HepG2 (cell line): ENCODE measurements at regions of chr19 and their contacts with region 1.

Region 1: DNA sequence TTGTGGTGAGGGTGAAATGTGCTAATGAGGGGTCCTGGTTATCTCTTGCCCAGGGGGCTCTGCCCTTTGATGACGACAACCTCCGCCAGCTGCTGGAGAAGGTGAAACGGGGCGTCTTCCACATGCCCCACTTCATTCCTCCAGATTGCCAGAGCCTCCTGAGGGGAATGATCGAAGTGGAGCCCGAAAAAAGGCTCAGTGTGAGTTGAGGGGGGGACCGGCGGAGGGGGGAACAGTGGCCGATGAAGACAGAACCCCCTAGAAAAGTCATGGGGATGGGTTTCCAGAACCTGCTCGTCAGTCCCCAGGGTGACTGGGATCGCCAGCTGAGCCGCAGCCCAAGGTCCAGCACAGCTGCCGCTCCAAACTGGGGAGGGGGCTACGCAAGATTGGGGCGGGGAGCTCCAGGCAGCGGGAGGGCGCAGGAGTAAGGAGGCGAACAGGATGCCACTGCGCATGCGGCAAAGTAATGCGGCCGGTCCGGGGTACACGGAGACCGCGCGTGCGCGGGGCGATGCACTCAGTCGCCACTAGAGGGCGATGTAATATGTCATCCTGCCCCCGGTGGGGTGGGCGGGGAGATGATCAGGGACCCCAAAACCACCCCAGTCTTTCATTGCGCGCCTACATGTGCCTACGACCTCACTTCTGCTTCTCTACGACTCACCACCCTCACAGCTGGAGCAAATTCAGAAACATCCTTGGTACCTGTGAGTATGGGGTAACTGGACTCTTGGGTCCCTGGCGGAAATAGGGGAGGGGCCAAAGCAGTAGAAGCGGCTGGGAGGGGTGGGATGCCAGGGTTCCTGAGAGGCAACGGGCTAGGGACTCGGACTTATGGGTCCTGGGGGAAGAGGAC is 17.9 kb downstream of the BRSK1 start:
- DNase-seq: peak; percentile 68
- ATAC-seq: peak; percentile 75
- H3K4me3 ChIP-seq: peak overlapping the region; percentile 55 to 75 (median 72)
- H3K27ac ChIP-seq: no peak overlapping the region
- H3K4me1 ChIP-seq: peaks cover 29% of the 10 kb centered on the region
- H3K27me3 ChIP-seq: peaks cover 0 to 20% of the 10 kb centered on the region in 2 experiments; a peak in 2 of 5 replicates
- CTCF ChIP-seq: peak; percentile 97
- EP300 ChIP-seq: no peak
- POLR2A ChIP-seq: peak in 1 of 2 experiments; percentile 48; a peak in 1 of 4 replicates
- RAD21 ChIP-seq: peak; percentile 78

Region 2: GRCh38 chr19:55279770-55280643 is 21.7 kb before region 1 on chr19 and contains the start of gene HSPBP1:
- CTCF ChIA-PET with region 1: no interaction called
- POLR2A ChIA-PET with region 1: interaction called, 12 read pairs
- in situ Hi-C with region 1: no loop called
- intact Hi-C with region 1: no loop called
- DNase-seq: peak; percentile 92
- ATAC-seq: peak; percentile 90
- H3K4me3 ChIP-seq: peak within 1 kb of the TSS; percentile 86 to 97 (median 93)
- H3K27ac ChIP-seq: peak within 1 kb of the TSS; percentile 68
- H3K4me1 ChIP-seq: peaks cover 24% of the 10 kb centered on the region
- H3K27me3 ChIP-seq: peaks cover 0 to 9% of the 10 kb centered on the region in 2 experiments; a peak in 3 of 5 replicates
- CTCF ChIP-seq: no peak
- EP300 ChIP-seq: no peak
- POLR2A ChIP-seq: peak; percentile 72 to 86
- RAD21 ChIP-seq: peak; percentile 10; the same call in 1 of the 2 replicates
- total RNA-seq, gene HSPBP1: 33.7 and 35.9 TPM in 2 replicates

Region 3: GRCh38 chr19:55339048-55339888 is 37.6 kb after region 1 on chr19 and contains the start of gene KMT5C:
- CTCF ChIA-PET with region 1: interaction called, 3 read pairs
- POLR2A ChIA-PET with region 1: interaction called, 15 read pairs
- in situ Hi-C with region 1: no loop called
- intact Hi-C with region 1: loop called (anchors 1 kb)
- DNase-seq: peak; percentile 100
- ATAC-seq: peak; percentile 91
- H3K4me3 ChIP-seq: peak within 1 kb of the TSS; percentile 82 to 99 (median 91)
- H3K27ac ChIP-seq: peak within 1 kb of the TSS; percentile 86
- H3K4me1 ChIP-seq: peaks cover 31% of the 10 kb centered on the region
- H3K27me3 ChIP-seq: no peaks in the 10 kb centered on the region; a peak in 1 of 5 replicates
- CTCF ChIP-seq: peak; percentile 59
- EP300 ChIP-seq: no peak
- POLR2A ChIP-seq: peak in 1 of 2 experiments; percentile 14; a peak in 2 of 4 replicates
- RAD21 ChIP-seq: peak; percentile 19; the same call in 1 of the 2 replicates
- total RNA-seq, gene KMT5C: 2.1 and 5.5 TPM in 2 replicates

Region 4: GRCh38 chr19:55385740-55386529 is 84.2 kb after region 1 on chr19 and contains the start of gene RPL28:
- CTCF ChIA-PET with region 1: no interaction called
- POLR2A ChIA-PET with region 1: interaction called, 7 read pairs
- in situ Hi-C with region 1: no loop called
- intact Hi-C with region 1: loop called (anchors 1 kb)
- DNase-seq: peak; percentile 96
- ATAC-seq: peak; percentile 77
- H3K4me3 ChIP-seq: peak within 1 kb of the TSS; percentile 86 to 100 (median 89)
- H3K27ac ChIP-seq: peak within 1 kb of the TSS; percentile 92
- H3K4me1 ChIP-seq: peaks cover 42% of the 10 kb centered on the region
- H3K27me3 ChIP-seq: no peaks in the 10 kb centered on the region; a peak in 1 of 5 replicates
- CTCF ChIP-seq: no peak; the same call in 1 of the 2 replicates
- EP300 ChIP-seq: no peak
- POLR2A ChIP-seq: peak; percentile 99 to 100
- RAD21 ChIP-seq: no peak
- total RNA-seq, gene RPL28: 105 and 149 TPM in 2 replicates

Region 5: GRCh38 chr19:55418185-55418584 is 116.5 kb after region 1 on chr19:
- CTCF ChIA-PET with region 1: interaction called, 9 read pairs
- POLR2A ChIA-PET with region 1: interaction called, 3 read pairs
- in situ Hi-C with region 1: loop called (anchors 5 kb)
- intact Hi-C with region 1: no loop called
- DNase-seq: peak; percentile 70
- ATAC-seq: peak; percentile 92
- H3K4me3 ChIP-seq: no peak overlapping the region
- H3K27ac ChIP-seq: no peak overlapping the region
- H3K4me1 ChIP-seq: peaks cover 10% of the 10 kb centered on the region
- H3K27me3 ChIP-seq: peaks cover 0 to 11% of the 10 kb centered on the region in 2 experiments; a peak in 1 of 5 replicates
- CTCF ChIP-seq: peak; percentile 93
- EP300 ChIP-seq: no peak
- POLR2A ChIP-seq: no peak
- RAD21 ChIP-seq: peak; percentile 84